Colonic mucosa (tissue), 4 donors: ENCODE measurements at regions of chr1 and their contacts with region 1.

Region 1: DNA sequence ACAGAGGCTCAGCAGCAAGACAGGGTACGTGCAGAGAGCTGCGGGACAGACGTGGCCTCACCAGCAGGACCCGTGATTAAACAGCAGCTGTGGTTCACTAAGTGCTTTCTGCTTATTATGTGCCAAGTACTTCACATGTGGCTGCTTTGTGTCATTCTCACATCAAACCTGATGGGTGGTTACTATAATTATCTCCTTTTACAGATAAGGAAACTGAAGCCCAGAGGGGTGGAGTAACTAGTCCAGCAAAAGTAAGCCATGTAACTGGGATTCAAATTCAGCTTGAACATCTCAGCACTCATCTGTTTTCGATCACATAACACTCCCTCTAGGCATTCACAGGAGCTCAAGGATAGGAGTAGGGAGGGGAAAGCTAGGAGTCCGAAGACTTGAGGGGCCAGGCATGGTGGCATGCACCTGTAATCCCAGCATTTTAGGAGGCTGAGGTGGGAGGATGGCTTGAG is 50.8 kb upstream of the CLIC4 start:
- DNase-seq: no peak
- H3K4me3 ChIP-seq: no peak overlapping the region
- H3K27ac ChIP-seq: no peak overlapping the region
- H3K4me1 ChIP-seq: no peaks in the 10 kb centered on the region
- H3K27me3 ChIP-seq: no peaks in the 10 kb centered on the region
- CTCF ChIP-seq: no peak

Region 2: GRCh38 chr1:24744911-24745710 is 50.7 kb after region 1 on chr1 and contains the start of gene CLIC4:
- intact Hi-C with region 1: loop called (anchors 5 kb)
- DNase-seq: peak; percentile 100
- H3K4me3 ChIP-seq: peak within 1 kb of the TSS; percentile 90
- H3K27ac ChIP-seq: peak within 1 kb of the TSS; percentile 92
- H3K4me1 ChIP-seq: peaks cover 11% of the 10 kb centered on the region
- H3K27me3 ChIP-seq: no peaks in the 10 kb centered on the region
- CTCF ChIP-seq: no peak
- total RNA-seq, gene CLIC4: 38.0 to 84.8 TPM